ENCODE measurements at regions of chr5 and their contacts with region 1.

Region 1: GRCh38 chr5:136174021-136174659 is 18.8 kb downstream of the SMIM32 start:
- DNase-seq: no peak
- H3K4me3 Mint-ChIP-seq: no peak overlapping the region
- H3K27ac Mint-ChIP-seq: no peak overlapping the region
- H3K4me1 Mint-ChIP-seq: no peaks in the 10 kb centered on the region
- H3K27me3 Mint-ChIP-seq: no peaks in the 10 kb centered on the region
- CTCF ChIP-seq: peak; percentile 58

Region 2: DNA sequence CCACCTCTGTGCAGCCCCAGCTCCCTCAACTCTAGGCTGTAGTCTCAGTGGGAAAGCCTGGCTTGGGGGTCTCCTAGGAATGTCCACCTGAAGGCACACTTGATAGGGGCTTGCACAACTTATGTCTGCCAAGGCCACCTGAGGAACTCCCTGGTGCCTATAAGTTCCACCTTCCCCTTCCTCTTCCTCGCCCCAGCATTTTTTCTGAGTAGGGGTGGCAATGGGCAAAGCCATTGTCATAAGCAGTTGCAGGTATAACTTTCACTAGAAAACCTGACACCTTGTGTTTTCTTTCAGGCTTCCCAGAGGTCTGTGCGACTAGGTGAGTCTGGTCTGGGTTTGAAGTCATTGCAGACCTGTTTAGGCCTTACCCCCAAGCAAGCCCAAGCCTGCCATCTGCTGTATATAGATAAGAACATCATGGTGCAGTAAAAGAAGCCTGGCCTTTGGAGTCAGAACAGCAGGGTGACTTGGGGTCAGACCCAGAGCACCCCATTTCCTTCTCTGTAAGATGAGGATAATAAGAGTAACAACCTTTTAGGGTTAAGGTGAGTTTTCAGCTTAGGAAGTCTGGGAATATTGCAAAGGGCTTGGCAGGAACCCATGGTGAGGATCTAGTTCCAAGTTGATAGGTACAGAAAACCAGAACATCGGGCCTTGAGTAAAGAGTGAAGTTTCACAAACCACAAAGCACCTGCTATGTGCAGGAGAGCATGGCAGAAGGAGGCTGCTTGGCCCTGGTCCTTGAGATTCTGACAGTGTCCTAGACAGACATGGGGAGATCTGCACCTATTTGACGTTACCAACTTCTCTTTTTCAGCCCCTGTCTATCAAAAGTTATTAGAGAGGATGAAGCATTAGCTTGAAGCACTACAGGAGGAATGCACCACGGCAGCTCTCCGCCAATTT is 111.5 kb before region 1 on chr5:
- CTCF ChIA-PET with region 1: interaction called, 3 read pairs
- intact Hi-C with region 1: loop called (anchors 2 kb)
- DNase-seq: peak; percentile 55
- H3K4me3 Mint-ChIP-seq: no peak overlapping the region
- H3K27ac Mint-ChIP-seq: no peak overlapping the region
- H3K4me1 Mint-ChIP-seq: peaks cover 28% of the 10 kb centered on the region
- H3K27me3 Mint-ChIP-seq: no peaks in the 10 kb centered on the region
- CTCF ChIP-seq: peak; percentile 34

Region 3: GRCh38 chr5:136080483-136081216 is 93.5 kb before region 1 on chr5:
- CTCF ChIA-PET with region 1: interaction called, 6 read pairs
- intact Hi-C with region 1: loop called (anchors 1 kb)
- DNase-seq: peak; percentile 95
- H3K4me3 Mint-ChIP-seq: peak overlapping the region; percentile 71
- H3K27ac Mint-ChIP-seq: peak overlapping the region; percentile 99
- H3K4me1 Mint-ChIP-seq: no peaks in the 10 kb centered on the region
- H3K27me3 Mint-ChIP-seq: no peaks in the 10 kb centered on the region
- CTCF ChIP-seq: no peak

Region 4: DNA sequence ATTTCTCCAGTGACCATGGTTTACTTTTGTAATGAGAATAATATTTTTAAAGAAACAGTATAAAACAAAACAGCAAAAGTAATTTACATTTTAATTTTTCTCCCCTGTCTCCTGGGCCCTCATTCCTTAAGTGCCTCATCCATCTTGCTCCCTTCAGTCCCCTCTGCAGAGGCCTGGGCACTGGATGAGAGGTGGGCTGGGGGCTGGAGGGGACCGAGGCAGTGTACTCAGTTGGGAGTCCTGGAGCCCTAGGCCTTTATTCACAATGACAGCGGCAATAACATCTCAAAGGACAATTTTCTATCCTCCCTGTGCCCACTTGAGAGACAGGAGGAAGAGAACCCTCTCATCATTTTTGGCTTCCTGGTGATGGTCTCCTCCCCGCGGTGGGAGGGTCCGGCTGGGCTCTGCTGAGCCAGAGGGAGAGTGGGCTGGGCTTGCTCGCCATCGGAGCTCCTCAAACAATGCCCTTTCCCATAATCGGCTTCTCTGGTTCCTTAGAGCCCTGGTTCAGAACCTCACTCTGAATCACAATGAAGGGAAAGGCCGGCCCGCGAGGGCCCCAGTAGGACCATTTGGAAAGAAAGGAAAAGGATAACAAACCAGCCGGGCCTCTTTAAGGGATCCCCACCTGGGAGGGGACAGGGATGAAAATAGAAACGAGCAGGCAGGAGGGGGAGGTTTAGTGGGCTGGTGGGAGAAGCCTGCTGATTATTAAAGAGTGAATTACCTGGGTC is 28.5 kb after region 1 on chr5:
- CTCF ChIA-PET with region 1: no interaction called
- intact Hi-C with region 1: no loop called
- DNase-seq: no peak
- H3K4me3 Mint-ChIP-seq: no peak overlapping the region
- H3K27ac Mint-ChIP-seq: no peak overlapping the region
- H3K4me1 Mint-ChIP-seq: peaks cover 35% of the 10 kb centered on the region
- H3K27me3 Mint-ChIP-seq: no peaks in the 10 kb centered on the region
- CTCF ChIP-seq: no peak

Region 5: GRCh38 chr5:136222583-136223274 is 48.6 kb after region 1 on chr5:
- CTCF ChIA-PET with region 1: no interaction called
- intact Hi-C with region 1: no loop called
- DNase-seq: no peak
- H3K4me3 Mint-ChIP-seq: no peak overlapping the region
- H3K27ac Mint-ChIP-seq: no peak overlapping the region
- H3K4me1 Mint-ChIP-seq: peaks cover 5% of the 10 kb centered on the region
- H3K27me3 Mint-ChIP-seq: peaks cover 20% of the 10 kb centered on the region
- CTCF ChIP-seq: no peak

Measured in Calu3 (cell line).